ENCODE measurements at regions of chr9 and their contacts with region 1.

Region 1: GRCh38 chr9:81656004-81656403 is 33.3 kb downstream of the TLE1 start:
- DNase-seq: peak; percentile 42
- ATAC-seq: peak; percentile 89
- H3K4me3 Mint-ChIP-seq: peak overlapping the region; percentile 78
- H3K27ac Mint-ChIP-seq: peak overlapping the region; percentile 97
- H3K4me1 Mint-ChIP-seq: peaks cover 84% of the 10 kb centered on the region
- H3K27me3 Mint-ChIP-seq: no peaks in the 10 kb centered on the region
- CTCF ChIP-seq: no peak

Region 2: GRCh38 chr9:81146656-81147337 is 509.2 kb before region 1 on chr9:
- CTCF ChIA-PET with region 1: no interaction called
- POLR2A ChIA-PET with region 1: no interaction called
- intact Hi-C with region 1: no loop called
- DNase-seq: no peak
- ATAC-seq: no peak
- H3K4me3 Mint-ChIP-seq: no peak overlapping the region
- H3K27ac Mint-ChIP-seq: no peak overlapping the region
- H3K4me1 Mint-ChIP-seq: no peaks in the 10 kb centered on the region
- H3K27me3 Mint-ChIP-seq: no peaks in the 10 kb centered on the region
- CTCF ChIP-seq: no peak

Region 3: DNA sequence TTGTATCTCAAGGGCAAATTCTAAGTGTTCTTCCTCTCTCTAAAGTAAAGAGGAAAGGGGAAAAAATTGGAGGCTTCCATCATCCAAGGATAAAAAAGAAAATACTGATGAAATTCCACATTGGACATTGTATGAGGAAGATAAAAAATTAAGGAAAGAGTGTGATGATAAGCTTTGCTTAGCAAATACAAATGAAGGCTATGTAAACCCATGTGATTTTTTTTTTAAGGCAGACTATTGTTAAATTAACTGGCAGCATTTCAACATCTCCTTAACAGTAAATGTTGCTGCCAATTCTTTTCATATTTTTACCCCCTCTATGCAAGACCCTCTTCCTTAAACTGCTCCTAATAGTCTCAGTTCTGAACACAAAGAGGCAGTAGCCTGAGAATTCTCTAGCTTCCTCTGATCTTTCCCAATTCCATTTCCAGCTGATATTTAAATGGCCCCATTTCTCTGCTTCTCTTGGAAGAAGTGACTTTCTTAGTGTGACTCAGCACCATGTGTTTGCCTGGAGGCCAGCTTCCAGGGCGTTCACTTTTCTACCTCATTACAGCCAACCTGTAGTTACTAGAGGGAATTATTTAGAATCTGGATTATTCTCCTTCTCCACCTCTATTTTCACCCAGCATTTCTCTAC is 126.3 kb before region 1 on chr9:
- CTCF ChIA-PET with region 1: no interaction called
- POLR2A ChIA-PET with region 1: interaction called, 9 read pairs
- intact Hi-C with region 1: loop called (anchors 1 kb)
- DNase-seq: no peak
- ATAC-seq: no peak
- H3K4me3 Mint-ChIP-seq: peak overlapping the region; percentile 25
- H3K27ac Mint-ChIP-seq: peak overlapping the region; percentile 69
- H3K4me1 Mint-ChIP-seq: peaks cover 18% of the 10 kb centered on the region
- H3K27me3 Mint-ChIP-seq: peaks cover 7% of the 10 kb centered on the region
- CTCF ChIP-seq: no peak

Region 4: GRCh38 chr9:81560851-81561732 is 94.9 kb before region 1 on chr9:
- CTCF ChIA-PET with region 1: no interaction called
- POLR2A ChIA-PET with region 1: no interaction called
- intact Hi-C with region 1: loop called (anchors 1 kb)
- DNase-seq: no peak
- ATAC-seq: peak; percentile 80
- H3K4me3 Mint-ChIP-seq: peak overlapping the region; percentile 82
- H3K27ac Mint-ChIP-seq: peak overlapping the region; percentile 91
- H3K4me1 Mint-ChIP-seq: peaks cover 14% of the 10 kb centered on the region
- H3K27me3 Mint-ChIP-seq: no peaks in the 10 kb centered on the region
- CTCF ChIP-seq: no peak

Region 5: DNA sequence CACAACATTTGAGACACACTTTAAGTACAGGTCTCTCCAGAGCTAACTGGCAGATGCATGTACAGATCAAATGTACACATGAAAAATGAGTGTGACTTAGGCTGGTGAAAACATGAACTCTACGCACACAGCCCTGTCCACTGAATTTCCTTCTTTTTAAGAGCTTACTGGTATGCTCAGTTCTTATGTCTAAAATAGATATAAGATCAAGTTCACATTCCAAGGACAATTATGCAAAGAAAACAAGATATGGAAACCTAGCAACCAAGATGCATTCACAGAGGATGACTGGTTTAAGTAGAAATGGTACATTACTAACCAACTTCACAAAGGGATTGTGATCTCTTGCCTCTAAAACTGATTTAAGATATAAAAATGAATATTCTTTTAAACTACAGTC is 23.4 kb before region 1 on chr9:
- CTCF ChIA-PET with region 1: no interaction called
- POLR2A ChIA-PET with region 1: no interaction called
- intact Hi-C with region 1: loop called (anchors 2 kb)
- DNase-seq: no peak
- ATAC-seq: no peak
- H3K4me3 Mint-ChIP-seq: no peak overlapping the region
- H3K27ac Mint-ChIP-seq: no peak overlapping the region
- H3K4me1 Mint-ChIP-seq: peaks cover 34% of the 10 kb centered on the region
- H3K27me3 Mint-ChIP-seq: no peaks in the 10 kb centered on the region
- CTCF ChIP-seq: no peak

Region 6: DNA sequence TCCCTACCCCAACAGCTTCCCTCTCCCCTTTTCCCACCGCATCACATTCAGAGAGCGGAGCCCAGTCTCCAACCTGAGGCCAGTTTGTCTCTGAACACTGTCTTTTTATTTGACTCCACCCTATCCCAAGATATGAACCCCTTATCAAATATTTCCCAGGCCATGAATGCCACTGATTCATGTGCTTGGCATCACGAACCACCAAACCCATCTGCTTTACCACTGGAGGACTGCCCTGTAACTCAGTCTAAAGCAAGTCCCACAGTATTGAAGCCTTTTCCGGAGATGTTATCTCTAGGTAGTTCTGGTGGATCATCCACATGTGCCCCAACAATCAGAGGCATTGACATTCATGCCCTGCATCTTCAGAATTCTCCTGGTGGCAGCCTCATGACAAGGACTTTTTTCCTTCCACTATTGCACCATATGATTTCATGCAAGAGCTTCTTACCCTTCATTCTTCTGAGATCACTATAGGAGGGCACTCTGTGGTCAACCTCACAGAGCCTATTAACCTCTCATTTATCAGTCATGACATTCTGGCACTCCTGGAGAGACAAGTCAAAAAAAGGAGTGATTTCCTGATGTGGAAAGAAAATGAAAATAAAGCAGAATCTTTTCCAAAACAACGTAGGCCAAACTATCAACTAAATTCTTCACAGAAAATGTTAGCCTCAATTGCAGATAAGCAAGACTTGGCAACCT is 259.9 kb after region 1 on chr9:
- CTCF ChIA-PET with region 1: no interaction called
- POLR2A ChIA-PET with region 1: no interaction called
- intact Hi-C with region 1: no loop called
- DNase-seq: no peak
- ATAC-seq: no peak
- H3K4me3 Mint-ChIP-seq: no peak overlapping the region
- H3K27ac Mint-ChIP-seq: no peak overlapping the region
- H3K4me1 Mint-ChIP-seq: no peaks in the 10 kb centered on the region
- H3K27me3 Mint-ChIP-seq: peaks cover 4% of the 10 kb centered on the region
- CTCF ChIP-seq: no peak

Measured in activated B cell treated with CpG ODN at 0.5 μM for 24 hours (primary cell).